PC-3 (cell line): ENCODE measurements at regions of chr6 and their contacts with region 1.

Region 1: GRCh38 chr6:89970609-89971337 is 76.5 kb downstream of the GJA10 start:
- DNase-seq: peak; percentile 73
- ATAC-seq: peak; percentile 90
- H3K4me3 ChIP-seq: no peak overlapping the region
- H3K27ac ChIP-seq: peak overlapping the region; percentile 25
- H3K4me1 ChIP-seq: peaks cover 14% of the 10 kb centered on the region
- H3K27me3 ChIP-seq: no peaks in the 10 kb centered on the region
- CTCF ChIP-seq: peak; percentile 70

Region 2: GRCh38 chr6:90088009-90088408 is 117.2 kb after region 1 on chr6:
- CTCF ChIA-PET with region 1: no interaction called
- POLR2A ChIA-PET with region 1: no interaction called
- intact Hi-C with region 1: loop called (anchors 2 kb)
- DNase-seq: peak; percentile 75
- ATAC-seq: peak; percentile 45
- H3K4me3 ChIP-seq: no peak overlapping the region
- H3K27ac ChIP-seq: peak overlapping the region; percentile 78
- H3K4me1 ChIP-seq: peaks cover 29% of the 10 kb centered on the region
- H3K27me3 ChIP-seq: no peaks in the 10 kb centered on the region
- CTCF ChIP-seq: no peak

Region 3: GRCh38 chr6:90179190-90180169 is 208.7 kb after region 1 on chr6:
- CTCF ChIA-PET with region 1: no interaction called
- POLR2A ChIA-PET with region 1: no interaction called
- intact Hi-C with region 1: loop called (anchors 2 kb)
- DNase-seq: peak; percentile 35
- ATAC-seq: no peak
- H3K4me3 ChIP-seq: no peak overlapping the region
- H3K27ac ChIP-seq: no peak overlapping the region
- H3K4me1 ChIP-seq: no peaks in the 10 kb centered on the region
- H3K27me3 ChIP-seq: no peaks in the 10 kb centered on the region
- CTCF ChIP-seq: peak; percentile 71

Region 4: GRCh38 chr6:90296346-90297114 is 325.8 kb after region 1 on chr6 and contains the start of gene BACH2:
- CTCF ChIA-PET with region 1: no interaction called
- POLR2A ChIA-PET with region 1: no interaction called
- intact Hi-C with region 1: loop called (anchors 2 kb)
- DNase-seq: peak; percentile 84
- ATAC-seq: peak; percentile 70
- H3K4me3 ChIP-seq: peak within 1 kb of the TSS; percentile 90
- H3K27ac ChIP-seq: no peak within 1 kb of the TSS
- H3K4me1 ChIP-seq: 0 out of 2 replicates have a peak, but pooled peaks cover 4% of the 10 kb centered on the region
- H3K27me3 ChIP-seq: no peaks in the 10 kb centered on the region
- CTCF ChIP-seq: no peak
- total RNA-seq, gene BACH2: 4.8 and 7.0 TPM in 2 replicates

Region 5: GRCh38 chr6:90393232-90393884 is 422.6 kb after region 1 on chr6:
- CTCF ChIA-PET with region 1: no interaction called
- POLR2A ChIA-PET with region 1: no interaction called
- intact Hi-C with region 1: loop called (anchors 1 kb)
- DNase-seq: peak; percentile 69
- ATAC-seq: peak; percentile 62
- H3K4me3 ChIP-seq: no peak overlapping the region
- H3K27ac ChIP-seq: no peak overlapping the region
- H3K4me1 ChIP-seq: peaks cover 16% of the 10 kb centered on the region
- H3K27me3 ChIP-seq: no peaks in the 10 kb centered on the region
- CTCF ChIP-seq: peak; percentile 75